Psoas muscle (tissue), 8 donors: ENCODE measurements at regions of chr17 and their contacts with region 1.

Region 1: GRCh38 chr17:14276535-14277250 is 24.2 kb upstream of the HS3ST3B1 start:
- DNase-seq: no peak
- ATAC-seq: no peak
- H3K4me3 ChIP-seq: no peak overlapping the region
- H3K27ac ChIP-seq: no peak overlapping the region
- H3K4me1 ChIP-seq: no peaks in the 10 kb centered on the region
- H3K27me3 ChIP-seq: peaks cover 0 to 3% (median 0%) of the 10 kb centered on the region in 3 donors
- CTCF ChIP-seq: no peak

Region 2: DNA sequence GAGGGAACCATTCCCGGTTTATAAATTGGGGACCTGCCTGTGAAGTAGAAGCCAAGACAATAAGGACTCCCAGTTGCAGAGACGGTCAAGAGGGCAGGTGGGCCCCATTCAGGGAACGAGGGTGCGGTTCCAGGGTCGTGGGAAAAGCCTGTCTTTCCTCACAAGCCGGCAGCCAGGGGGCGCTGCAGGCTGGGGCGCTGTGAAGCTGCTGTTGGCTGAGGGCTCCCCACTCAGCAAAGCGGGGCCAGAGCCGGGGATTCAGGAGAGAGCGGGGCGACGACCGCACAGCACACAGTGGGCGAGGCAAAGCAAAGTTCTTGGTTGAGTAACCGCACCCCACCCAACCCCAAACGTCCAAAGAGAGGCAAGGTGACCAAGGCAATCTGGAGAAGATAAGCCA is 64.9 kb before region 1 on chr17:
- intact Hi-C with region 1: loop called in 1 of 2 experiments (anchors 10 kb)
- DNase-seq: peak; percentile 37 to 68
- ATAC-seq: no peak
- H3K4me3 ChIP-seq: no peak overlapping the region
- H3K27ac ChIP-seq: no peak overlapping the region
- H3K4me1 ChIP-seq: no peaks in the 10 kb centered on the region
- H3K27me3 ChIP-seq: no peaks in the 10 kb centered on the region
- CTCF ChIP-seq: peak; percentile 40

Region 3: DNA sequence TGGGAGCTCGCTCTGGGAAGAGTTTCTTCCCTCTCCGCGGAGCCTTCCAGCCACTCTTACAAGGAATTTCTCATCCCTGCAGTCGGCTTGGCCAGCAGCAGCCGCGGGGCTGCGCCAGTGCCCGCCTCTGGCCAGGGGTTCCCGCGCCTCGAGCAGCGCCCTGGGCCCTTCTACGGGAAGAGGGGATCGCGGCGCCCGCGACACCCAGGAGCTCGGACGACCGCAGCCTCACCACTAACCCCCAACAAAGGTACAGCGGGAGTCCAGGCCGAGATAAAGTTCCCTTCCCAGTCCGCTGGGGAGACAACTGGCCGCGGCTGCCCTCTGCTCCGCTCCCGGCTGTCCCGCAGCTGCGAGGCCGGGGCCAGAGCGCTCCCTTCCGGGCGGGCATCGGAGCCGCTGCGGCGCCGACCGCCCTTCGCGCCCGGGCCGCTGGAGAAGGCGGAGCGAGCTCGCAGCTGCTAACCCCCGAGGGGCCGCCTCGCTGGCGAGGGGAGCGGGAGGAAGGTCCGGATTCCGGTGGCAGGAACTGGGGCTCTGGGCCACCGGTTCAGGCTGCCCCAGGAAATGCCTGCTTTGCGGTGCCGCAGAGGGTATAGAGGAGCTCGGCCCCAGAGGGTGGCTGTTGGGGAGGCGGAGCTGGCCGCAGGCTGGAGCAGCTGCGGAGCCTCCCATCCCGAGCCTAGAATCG is 20.6 kb after region 1 on chr17:
- intact Hi-C with region 1: no loop called
- DNase-seq: peak; percentile 55 to 67
- ATAC-seq: peak in 3 of 4 donors; percentile 25 to 39 (median 26)
- H3K4me3 ChIP-seq: peak overlapping the region; percentile 61
- H3K27ac ChIP-seq: no peak overlapping the region
- H3K4me1 ChIP-seq: peaks cover 13% of the 10 kb centered on the region
- H3K27me3 ChIP-seq: peaks cover 0 to 90% (median 29%) of the 10 kb centered on the region in 3 donors
- CTCF ChIP-seq: peak; percentile 17